ENCODE measurements at regions of chr1 and their contacts with region 1.

Region 1: DNA sequence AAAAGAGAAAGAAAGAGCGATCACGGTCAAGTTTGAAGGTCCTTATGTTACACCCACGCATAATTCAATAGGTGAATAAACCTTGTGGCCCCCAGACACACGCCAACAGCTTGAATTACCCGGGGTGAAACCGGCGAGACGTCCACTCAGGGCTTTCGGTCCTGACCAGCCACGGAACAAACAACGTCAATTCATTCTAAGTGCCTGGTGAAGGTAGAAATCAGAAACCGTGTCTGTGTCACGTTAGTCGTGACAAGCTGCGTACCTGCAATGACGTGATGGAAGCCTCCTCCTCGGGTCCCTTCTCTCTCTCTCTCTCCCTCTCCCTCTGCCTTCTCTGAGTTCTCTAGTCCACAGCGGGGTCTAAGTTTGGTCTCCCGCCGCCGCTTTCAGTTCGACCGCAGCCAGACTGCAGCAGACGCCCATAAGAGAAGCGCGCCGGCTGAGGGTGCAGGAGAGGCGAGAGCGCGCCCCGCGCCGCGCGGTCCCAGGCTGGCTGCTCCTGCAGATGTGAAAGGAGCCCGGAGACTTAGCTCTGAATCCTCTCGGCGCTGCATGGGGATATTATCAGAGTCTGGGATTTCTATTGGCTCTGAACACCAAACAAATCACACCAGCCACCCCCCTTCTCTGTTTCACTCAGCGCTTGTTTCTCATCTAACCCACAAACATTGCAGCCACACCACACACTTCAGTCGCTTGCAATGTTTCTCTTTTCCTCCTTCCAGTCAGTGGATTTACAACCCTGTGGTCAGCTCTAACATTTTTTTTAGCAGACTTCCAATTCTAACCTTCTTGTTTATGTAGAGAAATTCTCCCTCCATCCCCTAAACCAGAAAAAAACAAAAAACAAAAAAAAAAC is at the start of gene GREM2:
- DNase-seq: peak; percentile 44 to 79 (median 65)
- H3K4me3 ChIP-seq: peak within 1 kb of the TSS; percentile 44
- H3K27ac ChIP-seq: no peak within 1 kb of the TSS
- H3K4me1 ChIP-seq: no peaks in the 10 kb centered on the region
- H3K27me3 ChIP-seq: no peaks in the 10 kb centered on the region
- CTCF ChIP-seq: no peak
- EP300 ChIP-seq: no peak
- POLR2A ChIP-seq: no peak
- total RNA-seq, gene GREM2: 0.95 to 16.7 (median 5.4) TPM

Region 2: GRCh38 chr1:240312872-240313271 is 299.0 kb before region 1 on chr1:
- intact Hi-C with region 1: loop called in 1 of 4 experiments (anchors 10 kb)
- DNase-seq: no peak
- H3K4me3 ChIP-seq: no peak overlapping the region
- H3K27ac ChIP-seq: no peak overlapping the region
- H3K4me1 ChIP-seq: peaks cover 3% of the 10 kb centered on the region
- H3K27me3 ChIP-seq: no peaks in the 10 kb centered on the region
- CTCF ChIP-seq: no peak
- EP300 ChIP-seq: no peak
- POLR2A ChIP-seq: no peak

Region 3: GRCh38 chr1:240344918-240345317 is 266.9 kb before region 1 on chr1:
- intact Hi-C with region 1: loop called in 1 of 4 experiments (anchors 10 kb)
- DNase-seq: no peak
- H3K4me3 ChIP-seq: no peak overlapping the region
- H3K27ac ChIP-seq: no peak overlapping the region
- H3K4me1 ChIP-seq: no peaks in the 10 kb centered on the region
- H3K27me3 ChIP-seq: no peaks in the 10 kb centered on the region
- CTCF ChIP-seq: no peak
- EP300 ChIP-seq: no peak
- POLR2A ChIP-seq: no peak

Region 4: GRCh38 chr1:240831922-240832321 is 220.1 kb after region 1 on chr1:
- intact Hi-C with region 1: no loop called
- DNase-seq: no peak
- H3K4me3 ChIP-seq: no peak overlapping the region
- H3K27ac ChIP-seq: no peak overlapping the region
- H3K4me1 ChIP-seq: no peaks in the 10 kb centered on the region
- H3K27me3 ChIP-seq: no peaks in the 10 kb centered on the region
- CTCF ChIP-seq: no peak
- EP300 ChIP-seq: no peak
- POLR2A ChIP-seq: no peak

Measured in ovary (tissue), 10 donors.